ENCODE measurements at regions of chr13 and their contacts with region 1.

Region 1: GRCh38 chr13:50229960-50230661 is 214.9 kb downstream of the KCNRG start:
- DNase-seq: peak; percentile 60
- H3K4me3 Mint-ChIP-seq: peak overlapping the region; percentile 32
- H3K27ac Mint-ChIP-seq: peak overlapping the region; percentile 20
- H3K4me1 Mint-ChIP-seq: peaks cover 51% of the 10 kb centered on the region
- H3K27me3 Mint-ChIP-seq: peaks cover 26% of the 10 kb centered on the region

Region 2: DNA sequence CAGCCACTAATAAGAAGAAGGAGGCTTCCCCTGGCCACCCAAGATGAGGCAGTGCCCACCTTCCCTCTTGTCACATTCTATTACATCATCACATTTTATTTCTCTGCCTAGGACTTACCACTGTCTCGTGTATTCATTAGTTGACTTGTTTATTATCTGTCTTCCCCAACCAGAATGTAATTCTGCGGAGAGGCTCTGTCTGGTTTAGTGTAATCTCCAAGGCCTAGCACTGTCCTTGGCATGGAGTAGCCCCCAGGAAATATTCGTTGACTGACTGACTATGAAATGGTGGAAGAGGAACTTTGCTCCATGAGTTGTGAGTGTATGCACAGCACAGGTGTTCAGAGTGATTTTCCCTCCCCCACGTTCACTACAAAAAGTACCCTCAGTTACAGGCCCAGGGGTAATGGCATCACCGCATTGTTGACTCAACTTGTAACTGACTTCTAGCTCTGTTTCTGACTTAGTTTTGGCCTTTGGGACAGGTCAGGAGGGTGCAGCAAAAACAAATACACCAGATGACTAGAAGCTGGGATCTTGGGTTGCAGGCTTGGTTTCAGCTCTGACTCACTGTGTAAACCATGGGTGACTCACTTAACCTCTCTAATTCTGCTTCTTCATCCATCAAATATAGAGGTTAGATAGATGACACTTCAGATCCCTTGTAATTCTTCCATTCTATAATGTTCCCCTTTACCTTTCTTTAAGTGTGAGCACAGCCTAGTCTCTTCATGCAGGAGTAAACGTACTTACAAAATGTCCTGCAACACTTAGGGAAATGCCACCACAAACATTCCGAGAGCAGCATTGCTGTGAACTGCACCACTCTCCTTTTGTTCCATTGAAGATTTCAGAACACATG is 14.8 kb after region 1 on chr13:
- intact Hi-C with region 1: loop called (anchors 1 kb)
- DNase-seq: peak; percentile 78
- H3K4me3 Mint-ChIP-seq: peak overlapping the region; percentile 41
- H3K27ac Mint-ChIP-seq: peak overlapping the region; percentile 73
- H3K4me1 Mint-ChIP-seq: peaks cover 34% of the 10 kb centered on the region
- H3K27me3 Mint-ChIP-seq: peaks cover 33% of the 10 kb centered on the region

Measured in activated CD4-positive, alpha-beta T cell treated with anti-CD3 and anti-CD28 coated beads, Interleukin-2, amount 10 ng/mL, durations not matched to agents 24 days and 14 days (primary cell).